Activated naive CD8-positive, alpha-beta T cell treated with anti-CD3 and anti-CD28 coated beads, Interleukin-2, amount 10 ng/mL, durations not matched to agents 7 days and 5 days (primary cell): ENCODE measurements at regions of chr1 and their contacts with region 1.

Region 1: GRCh38 chr1:222654849-222655248 is 37.0 kb downstream of the MIA3 start:
- DNase-seq: peak; percentile 65
- ATAC-seq: peak; percentile 87
- H3K4me3 Mint-ChIP-seq: peak overlapping the region; percentile 65
- H3K27ac Mint-ChIP-seq: peak overlapping the region; percentile 93
- H3K4me1 Mint-ChIP-seq: peaks cover 59% of the 10 kb centered on the region
- H3K27me3 Mint-ChIP-seq: no peaks in the 10 kb centered on the region

Region 2: DNA sequence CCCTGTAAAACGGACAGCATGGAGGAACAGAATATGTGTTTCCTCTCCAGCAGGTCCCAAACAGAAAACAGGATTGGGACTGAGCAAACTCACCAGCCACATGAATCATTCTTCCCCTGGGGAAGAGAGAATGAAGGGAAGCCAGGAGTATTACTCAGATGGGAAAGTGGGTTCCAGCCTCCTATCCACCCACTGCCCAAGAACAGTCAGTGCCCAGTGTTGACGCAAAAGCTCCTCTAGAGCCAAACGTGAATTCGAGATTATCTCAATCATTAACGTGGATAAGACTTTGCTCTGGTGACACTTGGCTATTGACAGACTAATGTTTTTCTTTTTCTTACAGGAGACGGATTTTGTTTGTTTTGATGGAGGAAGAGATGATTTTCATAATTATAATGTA is 27.6 kb before region 1 on chr1:
- POLR2A ChIA-PET with region 1: no interaction called
- DNase-seq: no peak
- ATAC-seq: no peak
- H3K4me3 Mint-ChIP-seq: no peak overlapping the region
- H3K27ac Mint-ChIP-seq: no peak overlapping the region
- H3K4me1 Mint-ChIP-seq: peaks cover 3% of the 10 kb centered on the region
- H3K27me3 Mint-ChIP-seq: no peaks in the 10 kb centered on the region

Region 3: DNA sequence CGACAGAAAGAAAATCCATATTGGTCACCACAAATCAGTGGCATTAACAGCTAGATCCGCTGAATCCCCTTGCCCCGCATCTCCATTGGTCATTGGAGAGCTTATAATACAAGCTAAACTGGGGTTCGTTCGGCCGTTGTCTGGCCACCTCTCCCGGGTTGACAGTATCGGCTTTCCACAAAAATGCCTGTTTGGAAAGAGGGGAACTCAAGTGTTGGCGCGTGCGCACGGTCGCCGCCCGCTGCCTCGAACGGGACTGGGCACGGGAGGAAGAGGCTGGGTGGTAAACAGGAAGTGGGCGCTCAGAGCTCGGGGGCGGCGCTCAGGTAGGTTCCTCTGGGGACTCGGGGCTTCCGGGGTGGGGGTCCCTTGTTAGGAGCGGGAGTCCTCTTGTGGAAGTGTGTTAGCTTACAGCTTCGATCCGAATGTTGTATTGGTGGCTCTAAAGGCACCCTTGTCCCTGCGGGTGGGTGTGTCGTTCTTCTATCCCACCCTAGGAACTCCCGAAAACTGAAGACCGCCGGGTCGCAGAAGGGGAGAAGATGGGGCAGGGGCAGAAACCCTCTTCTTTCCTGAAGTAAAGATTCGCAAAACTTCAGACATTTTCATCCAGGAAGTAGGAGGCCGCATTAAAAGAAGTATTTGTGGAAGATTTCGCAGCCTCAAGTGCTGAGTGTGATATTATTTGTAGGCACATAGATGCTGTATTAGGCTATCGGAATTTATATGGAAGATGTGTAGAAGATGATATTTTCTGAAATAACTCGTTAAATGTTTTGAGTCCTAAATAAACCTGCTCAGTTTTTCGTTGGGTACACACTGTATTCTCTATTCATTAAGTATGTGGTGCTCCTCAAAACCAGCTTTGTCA is 58.5 kb after region 1 on chr1:
- POLR2A ChIA-PET with region 1: interaction called, 40 read pairs
- DNase-seq: peak; percentile 86
- ATAC-seq: peak; percentile 67
- H3K4me3 Mint-ChIP-seq: peak overlapping the region; percentile 95
- H3K27ac Mint-ChIP-seq: peak overlapping the region; percentile 97
- H3K4me1 Mint-ChIP-seq: peaks cover 35% of the 10 kb centered on the region
- H3K27me3 Mint-ChIP-seq: no peaks in the 10 kb centered on the region